Colonic mucosa (tissue), 4 donors: ENCODE measurements at regions of chr2 and their contacts with region 1.

Region 1: GRCh38 chr2:130181325-130181879 is at the start of gene SMPD4:
- DNase-seq: peak; percentile 98
- H3K4me3 ChIP-seq: peak within 1 kb of the TSS; percentile 80
- H3K27ac ChIP-seq: peak within 1 kb of the TSS; percentile 97
- H3K4me1 ChIP-seq: no peaks in the 10 kb centered on the region
- H3K27me3 ChIP-seq: no peaks in the 10 kb centered on the region
- CTCF ChIP-seq: no peak
- total RNA-seq, gene SMPD4: 32.4 to 73.0 TPM

Region 2: DNA sequence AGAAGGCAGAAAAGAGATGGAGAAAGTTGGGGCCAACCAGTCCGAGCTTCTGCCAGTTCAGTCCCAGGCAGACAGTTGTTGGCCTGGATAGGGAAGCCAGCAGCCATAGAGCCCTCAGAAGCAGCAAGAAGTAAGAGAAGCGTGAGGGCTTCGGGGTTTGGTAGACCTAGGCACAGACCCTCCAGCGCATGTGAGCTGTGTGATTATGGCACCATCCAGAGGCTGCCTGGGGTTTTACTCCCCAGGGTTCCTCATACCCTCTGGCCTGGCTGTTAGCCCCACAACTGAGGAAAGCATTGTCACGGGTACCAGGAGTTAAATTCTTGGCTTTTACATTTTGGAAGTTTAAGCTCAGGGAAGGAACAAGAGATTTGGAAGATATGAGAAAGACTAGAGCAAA is 295.7 kb before region 1 on chr2:
- intact Hi-C with region 1: no loop called
- DNase-seq: no peak
- H3K4me3 ChIP-seq: no peak overlapping the region
- H3K27ac ChIP-seq: no peak overlapping the region
- H3K4me1 ChIP-seq: no peaks in the 10 kb centered on the region
- H3K27me3 ChIP-seq: no peaks in the 10 kb centered on the region
- CTCF ChIP-seq: no peak

Region 3: GRCh38 chr2:131492418-131493198 is 1311.2 kb after region 1 on chr2:
- intact Hi-C with region 1: loop called (anchors 5 kb)
- DNase-seq: peak; percentile 93
- H3K4me3 ChIP-seq: peak overlapping the region; percentile 79
- H3K27ac ChIP-seq: peak overlapping the region; percentile 94
- H3K4me1 ChIP-seq: peaks cover 4% of the 10 kb centered on the region
- H3K27me3 ChIP-seq: no peaks in the 10 kb centered on the region
- CTCF ChIP-seq: peak; percentile 70